ENCODE measurements at regions of chr3 and their contacts with region 1.

Region 1: GRCh38 chr3:120558771-120559241 is 37.3 kb upstream of the NDUFB4 start:
- DNase-seq: peak; percentile 82 to 90
- H3K4me3 ChIP-seq: peak overlapping the region in 2 of 3 donors; percentile 27 to 29
- H3K27ac ChIP-seq: peak overlapping the region; percentile 10 to 55 (median 53)
- H3K4me1 ChIP-seq: peaks cover 0 to 12% of the 10 kb centered on the region in 2 donors
- H3K27me3 ChIP-seq: no peaks in the 10 kb centered on the region
- CTCF ChIP-seq: peak; percentile 94 to 99 (median 98)
- POLR2A ChIP-seq: no peak

Region 2: GRCh38 chr3:120245386-120245785 is 313.4 kb before region 1 on chr3:
- intact Hi-C with region 1: loop called (anchors 2 kb)
- DNase-seq: no peak
- H3K4me3 ChIP-seq: no peak overlapping the region
- H3K27ac ChIP-seq: no peak overlapping the region
- H3K4me1 ChIP-seq: no peaks in the 10 kb centered on the region
- H3K27me3 ChIP-seq: no peaks in the 10 kb centered on the region
- CTCF ChIP-seq: no peak
- POLR2A ChIP-seq: no peak

Region 3: GRCh38 chr3:120348981-120349818 is 209.6 kb before region 1 on chr3 and contains the start of gene LRRC58:
- intact Hi-C with region 1: loop called (anchors 10 kb)
- DNase-seq: peak; percentile 91 to 94
- H3K4me3 ChIP-seq: peak within 1 kb of the TSS; percentile 51 to 76 (median 52)
- H3K27ac ChIP-seq: peak within 1 kb of the TSS; percentile 63 to 97 (median 90)
- H3K4me1 ChIP-seq: peaks cover 12 to 18% of the 10 kb centered on the region in 2 donors
- H3K27me3 ChIP-seq: no peaks in the 10 kb centered on the region
- CTCF ChIP-seq: peak in 4 of 6 experiments; percentile 10 to 28 (median 17)
- POLR2A ChIP-seq: peak; percentile 69 to 96
- total RNA-seq, gene LRRC58: 40.3 to 52.4 (median 44.6) TPM

Region 4: DNA sequence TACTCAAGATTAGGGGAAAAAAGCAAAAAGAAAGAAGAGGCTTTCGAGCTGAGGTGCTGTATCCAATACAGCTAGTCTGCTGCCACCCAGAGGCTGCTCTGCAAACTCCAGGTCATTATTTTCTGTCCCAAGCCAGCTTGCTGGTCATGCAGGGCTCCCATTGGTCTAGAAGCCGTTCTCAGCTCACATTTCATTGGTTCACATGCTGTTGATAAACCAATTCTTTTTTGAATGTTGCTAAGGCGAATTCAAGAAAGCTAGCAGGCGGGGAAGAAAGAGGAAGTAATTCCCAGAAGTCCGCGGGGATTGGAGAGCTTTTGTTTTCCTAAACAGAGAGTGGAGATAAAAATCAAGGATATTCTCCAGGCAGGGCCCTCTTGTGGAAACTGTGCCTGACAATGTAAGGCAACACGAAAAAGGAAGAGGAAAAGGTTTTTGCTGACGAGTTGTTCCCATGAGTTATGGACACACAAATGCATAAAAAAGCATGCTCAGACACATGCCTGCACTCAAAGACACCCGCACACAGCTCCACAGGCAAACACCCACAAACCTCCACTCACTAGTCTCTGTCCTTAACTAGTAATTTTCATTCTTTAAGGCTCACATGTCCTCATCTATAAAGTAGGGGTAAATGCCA is 141.4 kb before region 1 on chr3:
- intact Hi-C with region 1: loop called (anchors 5 kb)
- DNase-seq: peak; percentile 95 to 96
- H3K4me3 ChIP-seq: no peak overlapping the region
- H3K27ac ChIP-seq: peak overlapping the region; percentile 51 to 79 (median 58)
- H3K4me1 ChIP-seq: peaks cover 13 to 31% of the 10 kb centered on the region in 2 donors
- H3K27me3 ChIP-seq: no peaks in the 10 kb centered on the region
- CTCF ChIP-seq: peak; percentile 68 to 98 (median 88)
- POLR2A ChIP-seq: peak in 1 of 2 donors; percentile 62

Region 5: DNA sequence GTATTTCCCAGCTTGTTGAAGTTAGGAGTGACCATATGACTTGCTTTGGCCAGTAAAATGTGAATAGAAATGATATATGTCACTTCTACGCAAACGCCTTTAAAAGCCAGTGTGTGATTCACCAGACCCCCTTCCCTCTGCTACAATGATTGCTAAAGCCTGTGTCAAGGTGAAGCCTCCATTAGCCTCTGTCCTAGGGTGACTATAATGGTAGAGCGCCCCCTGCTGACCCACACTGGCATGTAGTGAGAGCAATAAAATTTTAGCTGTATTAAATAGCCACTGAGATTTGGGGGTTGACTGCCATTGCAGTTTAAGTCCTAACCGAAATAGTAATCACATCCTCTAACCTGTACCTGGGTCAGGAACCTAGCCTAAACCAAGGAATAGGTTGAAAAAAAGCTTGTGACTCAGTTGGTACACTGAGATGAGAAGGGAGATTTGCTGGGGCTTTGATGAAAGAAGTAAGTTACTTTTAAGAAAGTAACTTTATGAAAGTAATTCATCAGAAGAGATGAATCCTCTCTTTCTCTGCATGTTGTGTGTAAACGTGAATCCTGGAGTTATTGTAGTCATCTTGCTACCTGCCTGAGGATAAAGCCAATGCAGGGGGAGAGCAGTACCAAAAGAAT is 236.3 kb after region 1 on chr3:
- intact Hi-C with region 1: loop called (anchors 2 kb)
- DNase-seq: peak; percentile 81 to 88
- H3K4me3 ChIP-seq: no peak overlapping the region
- H3K27ac ChIP-seq: no peak overlapping the region
- H3K4me1 ChIP-seq: no peaks in the 10 kb centered on the region
- H3K27me3 ChIP-seq: no peaks in the 10 kb centered on the region
- CTCF ChIP-seq: peak; percentile 66 to 83 (median 78)
- POLR2A ChIP-seq: no peak

Measured in thyroid gland (tissue), 4 donors.